ENCODE measurements at regions of chr4 and their contacts with region 1.

Region 1: GRCh38 chr4:128386761-128387599 is 99.4 kb upstream of the PGRMC2 start:
- DNase-seq: peak; percentile 93
- H3K4me3 ChIP-seq: no peak overlapping the region
- H3K27ac ChIP-seq: peak overlapping the region; percentile 73 to 74
- H3K4me1 ChIP-seq: no peaks in the 10 kb centered on the region
- H3K27me3 ChIP-seq: no peaks in the 10 kb centered on the region
- CTCF ChIP-seq: peak in 2 of 4 experiments; percentile 16 to 21
- POLR2A ChIP-seq: no peak

Region 2: DNA sequence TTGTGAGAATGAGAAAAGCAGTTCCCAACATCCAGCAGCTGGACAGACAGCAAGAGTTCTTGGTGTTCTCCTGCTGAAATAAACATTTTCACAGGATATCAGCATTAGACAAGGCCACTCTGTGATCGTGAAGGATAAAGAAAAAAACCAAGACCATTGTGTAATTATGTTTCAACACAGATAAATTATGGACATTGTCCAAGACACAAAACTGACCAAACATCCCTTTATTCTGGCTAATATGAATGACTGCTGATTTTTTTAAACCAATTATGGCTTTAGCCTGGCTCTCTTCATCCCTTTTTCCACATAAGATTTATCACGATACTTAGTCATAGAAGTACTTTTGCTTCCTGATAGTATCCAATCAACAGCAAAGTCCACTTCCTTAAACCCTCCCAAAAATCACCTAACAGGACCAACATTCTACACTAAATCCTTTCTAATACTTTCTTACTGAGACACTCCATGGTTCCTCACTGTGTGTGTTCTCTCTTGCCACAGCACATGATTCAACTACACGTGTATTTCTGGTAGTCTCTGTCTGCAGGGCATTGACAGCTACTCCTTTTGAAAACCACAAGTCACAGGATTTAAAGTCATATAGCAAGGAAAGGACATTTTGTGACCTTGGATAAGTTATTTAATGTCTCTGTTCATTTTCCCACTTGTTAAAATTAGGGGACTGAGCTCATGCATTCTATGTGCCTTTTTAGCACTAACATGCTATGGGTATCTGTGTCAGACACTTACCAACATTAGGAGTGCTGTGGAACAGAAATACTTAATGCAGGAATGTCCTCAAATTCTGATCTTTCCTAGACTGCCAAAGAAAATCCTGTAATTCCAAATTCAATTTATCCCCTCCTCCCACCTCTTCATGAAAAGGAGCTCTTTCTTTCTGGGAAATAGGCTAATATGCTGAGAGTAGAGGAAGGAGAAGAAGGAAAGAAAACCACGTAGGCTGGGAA is 37.8 kb after region 1 on chr4:
- intact Hi-C with region 1: loop called (anchors 2 kb)
- DNase-seq: no peak
- H3K4me3 ChIP-seq: no peak overlapping the region
- H3K27ac ChIP-seq: no peak overlapping the region
- H3K4me1 ChIP-seq: no peaks in the 10 kb centered on the region
- H3K27me3 ChIP-seq: no peaks in the 10 kb centered on the region
- CTCF ChIP-seq: no peak
- POLR2A ChIP-seq: no peak

Region 3: GRCh38 chr4:128553686-128554515 is 166.9 kb after region 1 on chr4:
- intact Hi-C with region 1: loop called (anchors 5 kb)
- DNase-seq: peak; percentile 55
- H3K4me3 ChIP-seq: peak overlapping the region; percentile 38 to 40
- H3K27ac ChIP-seq: peak overlapping the region; percentile 89 to 96
- H3K4me1 ChIP-seq: no peaks in the 10 kb centered on the region
- H3K27me3 ChIP-seq: no peaks in the 10 kb centered on the region
- CTCF ChIP-seq: no peak
- POLR2A ChIP-seq: no peak

Region 4: GRCh38 chr4:128663336-128663735 is 276.4 kb after region 1 on chr4:
- intact Hi-C with region 1: loop called (anchors 5 kb)
- DNase-seq: peak; percentile 16
- H3K4me3 ChIP-seq: no peak overlapping the region
- H3K27ac ChIP-seq: peak overlapping the region; percentile 90 to 92
- H3K4me1 ChIP-seq: peaks cover 16% of the 10 kb centered on the region
- H3K27me3 ChIP-seq: no peaks in the 10 kb centered on the region
- CTCF ChIP-seq: no peak
- POLR2A ChIP-seq: no peak

Measured in prostate gland (tissue), 2 donors.